ENCODE measurements at regions of chr1 and their contacts with region 1.

Region 1: GRCh38 chr1:65075123-65075976 is 72.7 kb upstream of the AK4 start:
- DNase-seq: peak; percentile 35
- H3K4me3 Mint-ChIP-seq: no peak overlapping the region
- H3K27ac Mint-ChIP-seq: no peak overlapping the region
- H3K4me1 Mint-ChIP-seq: peaks cover 11% of the 10 kb centered on the region
- H3K27me3 Mint-ChIP-seq: no peaks in the 10 kb centered on the region

Region 2: DNA sequence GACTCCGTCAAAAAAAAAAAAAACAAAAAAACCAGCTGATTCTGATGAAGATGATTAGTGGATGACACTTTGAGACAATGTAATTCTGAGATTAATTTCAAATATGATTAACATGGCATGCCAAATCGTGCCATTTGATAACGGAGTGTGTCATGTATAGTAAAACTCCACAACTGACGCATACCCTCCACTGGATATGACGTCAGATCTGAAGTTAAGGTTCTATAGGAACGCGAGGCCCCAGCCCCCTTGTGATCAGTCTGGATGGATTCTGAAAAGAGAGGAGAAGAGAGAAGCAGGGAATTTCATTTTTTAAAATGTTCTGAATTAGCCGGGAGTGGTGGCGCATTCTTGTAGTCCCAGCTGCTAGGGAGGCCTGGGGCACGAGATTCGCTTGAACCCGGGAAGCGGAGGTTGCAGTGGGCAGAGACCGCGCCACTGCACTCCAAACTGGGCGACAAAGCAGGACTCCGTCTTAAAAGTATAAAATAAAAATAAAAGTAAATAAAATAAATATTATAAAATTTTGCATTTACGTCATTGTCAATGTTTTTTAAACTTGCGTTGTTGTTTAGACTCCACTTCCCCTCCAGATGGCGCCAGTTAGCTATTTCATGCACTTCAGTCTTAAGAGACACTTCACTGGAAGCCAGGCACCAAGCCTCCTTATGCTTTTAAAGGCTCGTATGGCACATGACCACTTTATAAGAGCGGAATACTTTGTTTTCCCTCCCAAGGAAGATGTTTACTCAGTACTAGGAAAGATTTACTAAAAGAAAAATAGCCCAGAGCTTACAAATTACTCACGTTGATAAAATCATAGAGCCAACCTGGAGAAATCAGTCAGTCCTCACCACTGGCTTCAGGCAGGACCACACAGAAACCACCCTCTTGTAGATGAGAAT is 806.4 kb before region 1 on chr1:
- intact Hi-C with region 1: loop called (anchors 5 kb)
- DNase-seq: peak; percentile 25
- H3K4me3 Mint-ChIP-seq: no peak overlapping the region
- H3K27ac Mint-ChIP-seq: no peak overlapping the region
- H3K4me1 Mint-ChIP-seq: no peaks in the 10 kb centered on the region
- H3K27me3 Mint-ChIP-seq: peaks cover 7% of the 10 kb centered on the region

Region 3: GRCh38 chr1:64790832-64791487 is 284.4 kb before region 1 on chr1:
- intact Hi-C with region 1: no loop called
- DNase-seq: no peak
- H3K4me3 Mint-ChIP-seq: no peak overlapping the region
- H3K27ac Mint-ChIP-seq: no peak overlapping the region
- H3K4me1 Mint-ChIP-seq: no peaks in the 10 kb centered on the region
- H3K27me3 Mint-ChIP-seq: no peaks in the 10 kb centered on the region

Region 4: GRCh38 chr1:65002508-65003315 is 72.6 kb before region 1 on chr1:
- intact Hi-C with region 1: no loop called
- DNase-seq: peak; percentile 50
- H3K4me3 Mint-ChIP-seq: peak overlapping the region; percentile 67
- H3K27ac Mint-ChIP-seq: no peak overlapping the region
- H3K4me1 Mint-ChIP-seq: peaks cover 34% of the 10 kb centered on the region
- H3K27me3 Mint-ChIP-seq: peaks cover 32% of the 10 kb centered on the region

Region 5: GRCh38 chr1:65048335-65048734 is 27.0 kb before region 1 on chr1:
- intact Hi-C with region 1: no loop called
- DNase-seq: no peak
- H3K4me3 Mint-ChIP-seq: no peak overlapping the region
- H3K27ac Mint-ChIP-seq: no peak overlapping the region
- H3K4me1 Mint-ChIP-seq: peaks cover 19% of the 10 kb centered on the region
- H3K27me3 Mint-ChIP-seq: no peaks in the 10 kb centered on the region

Region 6: GRCh38 chr1:65059930-65060538 is 15.3 kb before region 1 on chr1:
- intact Hi-C with region 1: loop called (anchors 1 kb)
- DNase-seq: no peak
- H3K4me3 Mint-ChIP-seq: no peak overlapping the region
- H3K27ac Mint-ChIP-seq: no peak overlapping the region
- H3K4me1 Mint-ChIP-seq: peaks cover 6% of the 10 kb centered on the region
- H3K27me3 Mint-ChIP-seq: no peaks in the 10 kb centered on the region

Measured in activated T-helper 2 cell treated with anti-CD3 and anti-CD28 coated beads, Interferon-gamma antibody, Interleukin-2, Interleukin-4, amounts not matched to agents 10 μg/mL and 5 μg/mL and 100 μg/mL, durations not matched to agents 14 hours and 24 hours and 36 hours (primary cell).